ENCODE measurements at regions of chr4 and their contacts with region 1.

Region 1: DNA sequence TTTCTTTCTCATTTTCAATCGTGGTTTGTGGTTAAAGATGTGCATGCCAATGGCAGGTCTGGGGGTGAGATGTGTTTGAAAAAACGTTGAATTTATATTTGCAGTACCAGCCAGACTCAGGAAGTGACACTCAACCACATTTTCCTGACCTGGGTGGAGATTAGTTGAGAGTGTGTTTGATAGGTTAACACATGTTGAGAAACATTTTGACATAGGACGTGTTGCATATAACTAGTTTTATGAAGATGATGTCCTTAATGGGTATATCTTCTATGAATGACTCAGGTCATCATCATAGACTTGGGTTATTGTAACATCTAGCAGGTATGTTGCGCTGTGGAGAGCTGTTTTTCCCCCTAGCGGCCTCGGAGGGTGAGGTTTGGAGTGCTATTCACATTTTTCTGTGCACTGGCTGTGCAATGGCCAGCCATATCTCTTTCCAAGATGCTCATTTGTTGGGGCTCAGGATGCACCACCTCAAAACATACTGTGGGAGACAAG is 21.7 kb upstream of the CD38 start:
- DNase-seq: peak; percentile 90
- ATAC-seq: peak; percentile 84
- H3K4me3 Mint-ChIP-seq: peak overlapping the region; percentile 74
- H3K27ac Mint-ChIP-seq: peak overlapping the region; percentile 90
- H3K4me1 Mint-ChIP-seq: peaks cover 67% of the 10 kb centered on the region
- H3K27me3 Mint-ChIP-seq: no peaks in the 10 kb centered on the region

Region 2: GRCh38 chr4:15729910-15730533 is 26.4 kb before region 1 on chr4:
- CTCF ChIA-PET with region 1: interaction called, 29 read pairs
- POLR2A ChIA-PET with region 1: no interaction called
- DNase-seq: peak; percentile 60
- ATAC-seq: peak; percentile 53
- H3K4me3 Mint-ChIP-seq: no peak overlapping the region
- H3K27ac Mint-ChIP-seq: no peak overlapping the region
- H3K4me1 Mint-ChIP-seq: peaks cover 28% of the 10 kb centered on the region
- H3K27me3 Mint-ChIP-seq: peaks cover 13% of the 10 kb centered on the region

Region 3: GRCh38 chr4:15771216-15772058 is 15.0 kb after region 1 on chr4:
- CTCF ChIA-PET with region 1: interaction called, 82 read pairs
- POLR2A ChIA-PET with region 1: interaction called, 83 read pairs
- DNase-seq: peak; percentile 48
- ATAC-seq: peak; percentile 74
- H3K4me3 Mint-ChIP-seq: peak overlapping the region; percentile 27
- H3K27ac Mint-ChIP-seq: peak overlapping the region; percentile 83
- H3K4me1 Mint-ChIP-seq: peaks cover 77% of the 10 kb centered on the region
- H3K27me3 Mint-ChIP-seq: peaks cover 5% of the 10 kb centered on the region

Region 4: DNA sequence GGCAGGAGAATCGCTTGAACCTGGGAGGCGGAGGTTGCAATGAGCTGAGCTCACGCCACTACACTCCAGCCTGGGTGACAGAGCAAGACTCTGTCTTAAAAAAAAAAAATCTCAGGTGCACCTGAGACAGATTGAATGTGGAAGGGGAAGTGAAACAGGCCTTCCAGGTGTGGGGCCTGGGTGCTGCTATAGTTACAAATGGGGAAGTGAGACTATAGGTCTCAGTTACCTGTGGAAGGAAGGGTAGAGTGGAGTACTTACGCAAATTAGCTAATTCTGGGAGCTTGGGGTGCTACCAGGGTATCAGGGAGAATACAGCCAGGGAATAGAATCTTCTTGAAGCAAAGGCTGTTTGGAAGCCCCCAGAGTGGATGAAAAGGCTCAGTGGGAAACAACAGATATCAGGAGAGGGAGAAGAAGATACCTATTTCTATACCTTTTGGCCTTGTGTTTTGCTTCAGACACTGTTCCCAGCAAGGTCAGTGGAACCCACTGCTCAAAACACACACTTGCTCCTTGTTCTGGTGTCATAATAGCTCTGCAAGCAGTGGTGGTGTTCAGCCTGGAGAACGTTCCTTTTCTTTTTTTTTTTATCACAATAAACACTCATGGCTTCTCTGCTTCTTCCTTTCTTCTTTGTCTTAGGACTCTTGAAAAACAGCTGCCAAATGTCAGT is 28.7 kb after region 1 on chr4:
- CTCF ChIA-PET with region 1: interaction called, 82 read pairs
- POLR2A ChIA-PET with region 1: interaction called, 29 read pairs
- DNase-seq: no peak
- ATAC-seq: no peak
- H3K4me3 Mint-ChIP-seq: no peak overlapping the region
- H3K27ac Mint-ChIP-seq: no peak overlapping the region
- H3K4me1 Mint-ChIP-seq: peaks cover 76% of the 10 kb centered on the region
- H3K27me3 Mint-ChIP-seq: no peaks in the 10 kb centered on the region